ENCODE measurements at regions of chr9 and their contacts with region 1.

Region 1: DNA sequence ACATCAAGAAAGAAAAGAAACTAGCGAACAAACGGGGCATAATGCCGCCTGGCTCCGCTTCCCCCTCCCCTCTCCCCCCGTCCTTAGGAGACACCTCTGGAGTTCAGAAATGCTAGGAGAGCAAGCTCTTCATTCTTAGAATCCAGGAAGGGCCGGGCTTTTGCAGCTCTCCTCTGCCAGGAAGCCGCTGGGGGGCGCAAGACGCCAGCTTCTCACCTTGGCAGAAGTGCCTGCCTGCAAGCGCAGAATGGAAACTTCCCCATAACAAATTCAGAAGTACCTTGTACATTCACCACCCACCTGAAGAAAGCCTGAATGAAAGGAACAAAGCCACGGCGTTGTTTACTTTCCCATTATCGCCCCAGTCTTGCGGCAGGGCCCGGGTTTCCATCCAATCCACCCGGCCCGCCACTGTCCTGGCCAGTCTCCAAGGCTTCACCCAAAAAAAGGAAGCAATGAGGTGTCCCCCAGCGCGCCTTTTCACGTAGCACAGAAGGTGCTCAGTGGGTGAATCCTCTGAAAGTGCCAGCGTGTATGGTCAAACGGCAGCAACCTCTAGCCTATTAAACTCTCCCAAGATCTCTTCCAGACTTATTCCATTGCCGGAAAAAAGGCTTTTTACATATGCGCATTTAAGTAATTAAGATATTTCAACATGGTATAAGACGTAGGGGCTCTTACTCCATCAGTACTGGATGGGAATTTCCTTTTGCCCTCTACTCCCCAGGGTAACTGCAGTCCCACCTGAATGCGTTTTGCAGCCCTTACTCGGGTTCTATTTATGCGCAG is 1.6 kb upstream of the GADD45G start:
- DNase-seq: peak; percentile 73 to 79 (median 74)
- H3K4me3 ChIP-seq: peak overlapping the region in 1 of 3 experiments; percentile 80
- H3K4me3 Mint-ChIP-seq: peak overlapping the region; percentile 70 to 90
- H3K27ac ChIP-seq: no peak overlapping the region
- H3K27ac Mint-ChIP-seq: peak overlapping the region in 2 of 7 donors; percentile 5 to 26
- H3K4me1 ChIP-seq: peaks cover 44 to 46% of the 10 kb centered on the region in 2 donors
- H3K4me1 Mint-ChIP-seq: peaks cover 35% of the 10 kb centered on the region
- H3K27me3 ChIP-seq: peaks cover 9 to 26% of the 10 kb centered on the region in 2 donors
- H3K27me3 Mint-ChIP-seq: peaks cover 18 to 40% (median 32%) of the 10 kb centered on the region in 3 donors
- CTCF ChIP-seq: peak; percentile 79

Region 2: GRCh38 chr9:89661956-89662717 is 59.0 kb after region 1 on chr9:
- intact Hi-C with region 1: loop called (anchors 5 kb)
- DNase-seq: peak; percentile 72 to 82 (median 76)
- H3K4me3 ChIP-seq: peak overlapping the region in 2 of 3 experiments; percentile 10 to 63
- H3K4me3 Mint-ChIP-seq: peak overlapping the region; percentile 67 to 70
- H3K27ac ChIP-seq: peak overlapping the region; percentile 39 to 81
- H3K27ac Mint-ChIP-seq: peak overlapping the region; percentile 66 to 85 (median 80)
- H3K4me1 ChIP-seq: peaks cover 49 to 52% of the 10 kb centered on the region in 2 donors
- H3K4me1 Mint-ChIP-seq: peaks cover 56% of the 10 kb centered on the region
- H3K27me3 ChIP-seq: no peaks in the 10 kb centered on the region
- H3K27me3 Mint-ChIP-seq: peaks cover 0 to 5% (median 2%) of the 10 kb centered on the region in 3 donors
- CTCF ChIP-seq: no peak

Region 3: DNA sequence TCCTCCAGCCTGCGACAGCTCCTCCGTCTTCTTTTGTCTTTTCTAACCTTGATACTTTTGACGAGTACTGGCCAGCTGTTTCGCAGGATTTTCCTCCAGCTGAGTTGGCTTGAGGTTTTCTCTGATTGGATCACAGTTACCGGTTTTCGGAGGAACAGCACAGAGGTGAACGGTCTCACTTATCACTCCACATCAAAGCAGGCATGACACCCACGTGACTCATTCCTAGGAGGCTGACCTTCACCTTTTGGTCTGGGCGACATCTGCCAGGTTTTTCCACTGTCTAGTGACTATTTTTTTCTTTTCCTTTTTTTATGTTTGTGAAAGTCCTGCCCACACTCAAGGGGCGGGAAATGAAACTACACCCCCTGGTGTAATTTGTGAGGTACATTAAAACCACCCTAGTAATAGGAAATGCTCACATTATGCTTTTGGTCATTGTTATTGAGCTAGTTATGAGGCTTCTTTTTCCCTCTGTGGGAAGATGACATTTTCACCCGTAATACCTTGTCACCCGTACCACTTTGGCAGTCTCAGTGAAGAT is 320.9 kb after region 1 on chr9:
- intact Hi-C with region 1: loop called in 1 of 2 experiments (anchors 5 kb)
- DNase-seq: no peak
- H3K4me3 ChIP-seq: no peak overlapping the region
- H3K4me3 Mint-ChIP-seq: no peak overlapping the region
- H3K27ac ChIP-seq: no peak overlapping the region
- H3K27ac Mint-ChIP-seq: no peak overlapping the region
- H3K4me1 ChIP-seq: no peaks in the 10 kb centered on the region
- H3K4me1 Mint-ChIP-seq: peaks cover 11% of the 10 kb centered on the region
- H3K27me3 ChIP-seq: no peaks in the 10 kb centered on the region
- H3K27me3 Mint-ChIP-seq: peaks cover 5 to 10% (median 7%) of the 10 kb centered on the region in 3 donors
- CTCF ChIP-seq: peak; percentile 22

Region 4: DNA sequence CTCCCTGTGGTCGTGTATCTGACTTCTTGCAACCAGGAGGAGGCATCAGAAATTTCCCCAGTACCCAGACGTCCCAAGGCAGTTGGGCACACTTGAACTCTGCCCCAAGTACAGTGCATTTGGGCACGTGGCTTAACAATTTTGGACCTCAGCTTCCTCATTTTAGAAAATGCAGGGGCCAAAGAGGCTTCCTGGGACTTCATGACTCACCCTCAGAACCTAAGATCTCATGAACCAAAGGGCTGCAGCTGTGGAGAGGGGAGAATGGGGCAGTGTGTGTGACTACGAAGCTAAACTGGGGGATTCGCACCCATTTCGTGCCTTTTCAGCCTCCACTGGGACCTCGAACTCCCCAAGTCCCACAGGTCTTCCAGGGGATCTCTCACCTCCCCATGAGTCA is 1257.7 kb after region 1 on chr9:
- intact Hi-C with region 1: loop called in 1 of 2 experiments (anchors 10 kb)
- DNase-seq: peak; percentile 74 to 94 (median 75)
- H3K4me3 ChIP-seq: no peak overlapping the region
- H3K4me3 Mint-ChIP-seq: no peak overlapping the region
- H3K27ac ChIP-seq: peak overlapping the region; percentile 75 to 76
- H3K27ac Mint-ChIP-seq: peak overlapping the region; percentile 78 to 91 (median 86)
- H3K4me1 ChIP-seq: peaks cover 23 to 33% of the 10 kb centered on the region in 2 donors
- H3K4me1 Mint-ChIP-seq: peaks cover 34% of the 10 kb centered on the region
- H3K27me3 ChIP-seq: no peaks in the 10 kb centered on the region
- H3K27me3 Mint-ChIP-seq: no peaks in the 10 kb centered on the region
- CTCF ChIP-seq: no peak